H1 (cell line): ENCODE measurements at regions of chr20 and their contacts with region 1.

Region 1: GRCh38 chr20:25669826-25670422 is 26.7 kb downstream of the ZNF337 start:
- DNase-seq: no peak
- H3K4me3 ChIP-seq: no peak overlapping the region
- H3K27ac ChIP-seq: no peak overlapping the region
- H3K4me1 ChIP-seq: no peaks in the 10 kb centered on the region; a peak in 1 of 7 replicates
- H3K27me3 ChIP-seq: no peaks in the 10 kb centered on the region
- CTCF ChIP-seq: peak; percentile 18 to 51 (median 47)
- EP300 ChIP-seq: no peak
- POLR2A ChIP-seq: no peak
- RAD21 ChIP-seq: peak; percentile 59 to 67

Region 2: DNA sequence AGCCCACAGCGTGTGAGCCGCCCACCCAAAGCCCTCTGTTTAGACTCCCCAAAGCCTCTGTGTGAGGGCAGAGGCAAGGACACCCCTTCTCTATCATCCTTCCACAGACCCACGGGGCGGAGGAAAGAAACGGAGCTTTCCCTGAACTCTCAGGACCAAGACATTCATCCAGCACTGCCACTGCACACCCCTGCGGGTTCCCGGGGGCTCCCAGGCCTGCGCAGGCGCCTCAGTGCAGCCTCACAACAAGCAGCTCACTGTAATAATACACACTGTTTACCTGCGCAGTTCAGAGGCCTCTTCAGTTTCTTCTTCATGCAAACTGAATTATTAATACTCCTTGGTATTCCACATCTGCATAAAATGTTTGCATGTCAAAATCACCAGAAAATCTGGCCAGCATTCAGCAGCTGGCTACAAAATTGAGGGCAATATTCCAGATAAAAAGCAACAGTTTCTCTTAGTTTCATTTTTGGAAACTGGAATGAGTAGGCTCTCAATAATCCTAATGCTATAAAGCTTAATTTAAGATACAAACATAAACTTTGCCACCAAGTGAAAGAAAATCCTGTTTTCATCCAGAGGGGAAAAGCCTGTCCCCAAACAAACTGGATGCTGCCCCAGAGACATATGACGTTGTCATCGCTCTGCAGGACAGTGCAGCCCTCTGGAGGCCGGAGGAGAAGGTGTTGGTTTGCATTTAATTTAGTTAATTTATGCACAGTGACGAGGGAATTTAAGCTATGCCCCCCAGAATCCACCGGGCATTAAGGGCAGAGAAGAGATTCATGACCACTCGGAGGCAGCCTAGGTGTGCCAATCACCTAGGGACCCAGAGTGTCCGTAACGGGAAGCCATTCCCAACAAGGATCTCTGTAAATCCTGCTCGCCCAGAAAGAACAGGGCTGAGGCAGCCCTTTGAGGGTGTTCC is 129.9 kb before region 1 on chr20:
- CTCF ChIA-PET with region 1: interaction called, 12 read pairs
- POLR2A ChIA-PET with region 1: no interaction called
- DNase-seq: no peak
- H3K4me3 ChIP-seq: no peak overlapping the region
- H3K27ac ChIP-seq: no peak overlapping the region
- H3K4me1 ChIP-seq: peaks cover 2 to 18% (median 6%) of the 10 kb centered on the region in 4 experiments
- H3K27me3 ChIP-seq: no peaks in the 10 kb centered on the region
- CTCF ChIP-seq: peak in 2 of 3 experiments; percentile 44 to 49; a peak in 3 of 4 replicates
- EP300 ChIP-seq: no peak
- POLR2A ChIP-seq: no peak
- RAD21 ChIP-seq: peak; percentile 47 to 54